Activated CD4-positive, alpha-beta T cell treated with anti-CD3 and anti-CD28 coated beads for 36 hours (primary cell): ENCODE measurements at regions of chr17 and their contacts with region 1.

Region 1: GRCh38 chr17:31373150-31374093 is 18.1 kb upstream of the RAB11FIP4 start:
- DNase-seq: peak; percentile 27
- ATAC-seq: peak; percentile 85
- H3K4me3 Mint-ChIP-seq: no peak overlapping the region
- H3K27ac Mint-ChIP-seq: no peak overlapping the region
- H3K4me1 Mint-ChIP-seq: peaks cover 22% of the 10 kb centered on the region
- H3K27me3 Mint-ChIP-seq: no peaks in the 10 kb centered on the region

Region 2: GRCh38 chr17:31015639-31016038 is 357.8 kb before region 1 on chr17:
- CTCF ChIA-PET with region 1: no interaction called
- POLR2A ChIA-PET with region 1: no interaction called
- intact Hi-C with region 1: loop called in 1 of 2 experiments (anchors 5 kb)
- DNase-seq: no peak
- ATAC-seq: no peak
- H3K4me3 Mint-ChIP-seq: no peak overlapping the region
- H3K27ac Mint-ChIP-seq: no peak overlapping the region
- H3K4me1 Mint-ChIP-seq: peaks cover 4% of the 10 kb centered on the region
- H3K27me3 Mint-ChIP-seq: peaks cover 2% of the 10 kb centered on the region

Region 3: GRCh38 chr17:31266042-31266441 is 107.4 kb before region 1 on chr17:
- CTCF ChIA-PET with region 1: interaction called, 6 read pairs
- POLR2A ChIA-PET with region 1: no interaction called
- intact Hi-C with region 1: loop called (anchors 1 kb)
- DNase-seq: no peak
- ATAC-seq: no peak
- H3K4me3 Mint-ChIP-seq: no peak overlapping the region
- H3K27ac Mint-ChIP-seq: no peak overlapping the region
- H3K4me1 Mint-ChIP-seq: no peaks in the 10 kb centered on the region
- H3K27me3 Mint-ChIP-seq: no peaks in the 10 kb centered on the region

Region 4: GRCh38 chr17:31313982-31314784 is 59.2 kb before region 1 on chr17 and contains the start of gene EVI2B:
- CTCF ChIA-PET with region 1: interaction called, 4 read pairs
- POLR2A ChIA-PET with region 1: no interaction called
- intact Hi-C with region 1: loop called in 1 of 2 experiments (anchors 2 kb)
- DNase-seq: peak; percentile 30
- ATAC-seq: peak; percentile 43
- H3K4me3 Mint-ChIP-seq: peak within 1 kb of the TSS; percentile 79
- H3K27ac Mint-ChIP-seq: peak within 1 kb of the TSS; percentile 93
- H3K4me1 Mint-ChIP-seq: peaks cover 48% of the 10 kb centered on the region
- H3K27me3 Mint-ChIP-seq: no peaks in the 10 kb centered on the region
- total RNA-seq, gene EVI2B: 10.3 to 14.8 TPM

Region 5: DNA sequence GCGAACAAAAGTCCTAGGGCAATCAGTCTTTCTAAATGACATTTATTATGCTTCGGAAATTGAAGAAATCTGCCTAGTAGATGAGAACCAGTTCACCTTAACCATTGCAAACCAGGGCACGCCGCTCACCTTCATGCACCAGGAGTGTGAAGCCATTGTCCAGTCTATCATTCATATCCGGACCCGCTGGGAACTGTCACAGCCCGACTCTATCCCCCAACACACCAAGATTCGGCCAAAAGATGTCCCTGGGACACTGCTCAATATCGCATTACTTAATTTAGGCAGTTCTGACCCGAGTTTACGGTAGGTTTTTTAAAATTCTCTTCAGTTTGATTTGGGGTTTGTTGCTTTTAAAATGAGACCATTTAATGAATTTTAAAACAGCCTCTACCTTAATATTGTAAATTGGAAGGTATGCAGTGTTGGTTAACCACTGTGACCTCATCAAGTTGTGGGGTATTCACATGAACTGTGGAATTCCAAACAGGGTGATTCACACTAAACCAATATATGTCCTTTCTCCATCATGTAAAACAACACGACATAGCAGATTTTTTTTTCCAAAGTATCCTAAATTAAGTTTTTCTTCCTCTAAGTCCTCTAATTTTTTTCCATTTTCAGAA is 45.8 kb before region 1 on chr17:
- CTCF ChIA-PET with region 1: interaction called, 3 read pairs
- POLR2A ChIA-PET with region 1: no interaction called
- intact Hi-C with region 1: loop called in 1 of 2 experiments (anchors 2 kb)
- DNase-seq: no peak
- ATAC-seq: no peak
- H3K4me3 Mint-ChIP-seq: no peak overlapping the region
- H3K27ac Mint-ChIP-seq: peak overlapping the region; percentile 53
- H3K4me1 Mint-ChIP-seq: peaks cover 39% of the 10 kb centered on the region
- H3K27me3 Mint-ChIP-seq: no peaks in the 10 kb centered on the region